Activated B cell treated with CpG ODN at 0.5 μM for 24 hours (primary cell): ENCODE measurements at regions of chr9 and their contacts with region 1.

Region 1: GRCh38 chr9:36166101-36166927 is 2.9 kb upstream of the CCIN start:
- DNase-seq: peak; percentile 89
- ATAC-seq: peak; percentile 99
- H3K4me3 Mint-ChIP-seq: peak overlapping the region; percentile 79
- H3K27ac Mint-ChIP-seq: no peak overlapping the region
- H3K4me1 Mint-ChIP-seq: peaks cover 7% of the 10 kb centered on the region
- H3K27me3 Mint-ChIP-seq: peaks cover 1% of the 10 kb centered on the region
- CTCF ChIP-seq: peak; percentile 90

Region 2: GRCh38 chr9:36008774-36009300 is 157.5 kb before region 1 on chr9:
- CTCF ChIA-PET with region 1: interaction called, 4 read pairs
- POLR2A ChIA-PET with region 1: no interaction called
- intact Hi-C with region 1: loop called (anchors 1 kb)
- DNase-seq: peak; percentile 20
- ATAC-seq: peak; percentile 92
- H3K4me3 Mint-ChIP-seq: no peak overlapping the region
- H3K27ac Mint-ChIP-seq: no peak overlapping the region
- H3K4me1 Mint-ChIP-seq: peaks cover 32% of the 10 kb centered on the region
- H3K27me3 Mint-ChIP-seq: peaks cover 19% of the 10 kb centered on the region
- CTCF ChIP-seq: peak; percentile 54

Region 3: GRCh38 chr9:36102742-36103495 is 63.4 kb before region 1 on chr9:
- CTCF ChIA-PET with region 1: interaction called, 299 read pairs
- POLR2A ChIA-PET with region 1: interaction called, 8 read pairs
- intact Hi-C with region 1: loop called (anchors 1 kb)
- DNase-seq: peak; percentile 68
- ATAC-seq: peak; percentile 100
- H3K4me3 Mint-ChIP-seq: no peak overlapping the region
- H3K27ac Mint-ChIP-seq: no peak overlapping the region
- H3K4me1 Mint-ChIP-seq: peaks cover 2% of the 10 kb centered on the region
- H3K27me3 Mint-ChIP-seq: no peaks in the 10 kb centered on the region
- CTCF ChIP-seq: peak; percentile 61

Region 4: GRCh38 chr9:36116593-36116992 is 49.7 kb before region 1 on chr9:
- CTCF ChIA-PET with region 1: interaction called, 13 read pairs
- POLR2A ChIA-PET with region 1: interaction called, 3 read pairs
- intact Hi-C with region 1: no loop called
- DNase-seq: no peak
- ATAC-seq: no peak
- H3K4me3 Mint-ChIP-seq: no peak overlapping the region
- H3K27ac Mint-ChIP-seq: no peak overlapping the region
- H3K4me1 Mint-ChIP-seq: no peaks in the 10 kb centered on the region
- H3K27me3 Mint-ChIP-seq: no peaks in the 10 kb centered on the region
- CTCF ChIP-seq: no peak

Region 5: GRCh38 chr9:36142510-36143244 is 23.6 kb before region 1 on chr9:
- CTCF ChIA-PET with region 1: interaction called, 19 read pairs
- POLR2A ChIA-PET with region 1: interaction called, 7 read pairs
- intact Hi-C with region 1: no loop called
- DNase-seq: no peak
- ATAC-seq: peak; percentile 52
- H3K4me3 Mint-ChIP-seq: peak overlapping the region; percentile 94
- H3K27ac Mint-ChIP-seq: peak overlapping the region; percentile 100
- H3K4me1 Mint-ChIP-seq: peaks cover 95% of the 10 kb centered on the region
- H3K27me3 Mint-ChIP-seq: no peaks in the 10 kb centered on the region
- CTCF ChIP-seq: no peak

Region 6: GRCh38 chr9:36190388-36191287 is 24.3 kb after region 1 on chr9 and contains the start of gene CLTA:
- CTCF ChIA-PET with region 1: interaction called, 25 read pairs
- POLR2A ChIA-PET with region 1: interaction called, 9 read pairs
- intact Hi-C with region 1: loop called (anchors 1 kb)
- DNase-seq: peak; percentile 84
- ATAC-seq: peak; percentile 98
- H3K4me3 Mint-ChIP-seq: peak within 1 kb of the TSS; percentile 95
- H3K27ac Mint-ChIP-seq: peak within 1 kb of the TSS; percentile 91
- H3K4me1 Mint-ChIP-seq: peaks cover 51% of the 10 kb centered on the region
- H3K27me3 Mint-ChIP-seq: no peaks in the 10 kb centered on the region
- CTCF ChIP-seq: no peak
- total RNA-seq, gene CLTA: 104 and 115 TPM in 2 replicates

Region 7: GRCh38 chr9:36765468-36766341 is 599.4 kb after region 1 on chr9:
- CTCF ChIA-PET with region 1: no interaction called
- POLR2A ChIA-PET with region 1: no interaction called
- intact Hi-C with region 1: no loop called
- DNase-seq: peak; percentile 89
- ATAC-seq: peak; percentile 98
- H3K4me3 Mint-ChIP-seq: no peak overlapping the region
- H3K27ac Mint-ChIP-seq: no peak overlapping the region
- H3K4me1 Mint-ChIP-seq: no peaks in the 10 kb centered on the region
- H3K27me3 Mint-ChIP-seq: peaks cover 17% of the 10 kb centered on the region
- CTCF ChIP-seq: no peak